Lower leg skin (tissue), 4 donors: ENCODE measurements at regions of chr17 and their contacts with region 1.

Region 1: DNA sequence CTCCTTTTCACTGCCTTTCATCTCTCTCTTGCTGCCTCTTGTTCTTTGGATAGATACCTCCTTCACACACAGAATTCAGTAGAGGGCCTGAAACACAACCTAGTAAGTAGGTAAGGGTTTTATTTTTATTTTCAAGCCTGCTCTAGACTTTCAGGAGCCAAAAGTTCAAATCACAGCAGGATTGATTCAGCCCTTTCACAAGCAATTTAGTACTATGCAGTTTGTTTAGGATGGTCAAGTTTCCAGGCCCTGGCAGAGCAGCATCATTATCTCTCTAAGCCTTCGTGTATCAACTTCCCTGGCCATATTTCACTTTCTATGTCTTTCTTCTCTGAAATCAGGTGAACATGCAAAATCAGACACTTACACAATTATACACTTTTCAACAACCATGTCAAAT is 148.8 kb upstream of the CORO6 start:
- DNase-seq: no peak
- H3K4me3 ChIP-seq: no peak overlapping the region
- CTCF ChIP-seq: no peak
- POLR2A ChIP-seq: no peak

Region 2: GRCh38 chr17:29633886-29634285 is 137.7 kb before region 1 on chr17:
- intact Hi-C with region 1: loop called (anchors 10 kb)
- DNase-seq: no peak
- H3K4me3 ChIP-seq: no peak overlapping the region
- CTCF ChIP-seq: no peak
- POLR2A ChIP-seq: no peak